Aorta (tissue), 5 donors: ENCODE measurements at regions of chr1 and their contacts with region 1.

Region 1: GRCh38 chr1:206612129-206612876 is at the start of gene EIF2D:
- DNase-seq: peak; percentile 95 to 98
- ATAC-seq: peak; percentile 100
- H3K4me3 ChIP-seq: peak within 1 kb of the TSS; percentile 43 to 83
- H3K27ac ChIP-seq: peak within 1 kb of the TSS in 1 of 2 donors; percentile 82
- H3K4me1 ChIP-seq: no peaks in the 10 kb centered on the region
- H3K27me3 ChIP-seq: no peaks in the 10 kb centered on the region
- total RNA-seq, gene EIF2D: 29.6 to 46.5 TPM

Region 2: DNA sequence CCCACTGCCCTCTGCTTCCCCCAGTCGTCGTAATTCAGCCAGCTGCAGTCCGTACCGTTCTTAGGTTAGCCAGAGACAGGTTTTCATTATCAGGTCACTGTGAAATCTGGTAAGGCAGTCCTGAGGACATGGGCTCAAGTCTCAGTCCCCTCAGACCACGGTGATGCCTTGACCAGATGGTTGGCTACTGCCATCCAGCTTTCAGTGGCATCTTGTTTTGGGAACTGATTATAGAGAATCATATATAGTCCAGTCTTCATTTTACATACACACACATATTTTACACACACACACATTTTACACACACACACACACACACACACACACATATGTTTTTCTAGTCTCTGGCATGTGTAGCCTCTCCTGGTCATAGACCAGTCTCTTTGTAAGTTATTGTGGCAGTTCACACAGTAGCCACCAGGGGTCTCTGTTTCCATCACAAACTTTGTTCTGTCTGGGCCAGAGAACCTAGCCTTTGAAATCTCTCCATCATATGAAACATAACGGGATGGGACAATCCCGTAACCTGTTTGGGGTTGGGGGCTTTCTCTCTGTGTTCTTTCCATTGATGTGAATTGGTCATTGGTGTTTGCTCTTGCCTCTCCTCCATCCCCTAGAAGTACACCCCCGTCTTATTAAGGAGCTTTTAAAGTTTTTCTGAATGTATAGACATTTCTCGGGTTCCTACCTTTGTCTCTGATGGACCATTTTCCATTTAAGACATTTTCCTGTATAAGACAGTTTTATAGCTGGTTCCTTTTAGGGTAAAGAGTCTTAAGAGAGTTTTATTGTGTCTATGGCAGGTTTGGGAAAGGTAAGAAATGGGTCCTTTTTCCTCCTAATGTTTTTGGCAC is 150.5 kb before region 1 on chr1:
- intact Hi-C with region 1: no loop called
- DNase-seq: peak in 1 of 2 donors; percentile 71
- ATAC-seq: peak; percentile 82
- H3K4me3 ChIP-seq: no peak overlapping the region
- H3K27ac ChIP-seq: no peak overlapping the region
- H3K4me1 ChIP-seq: peaks cover 0 to 2% of the 10 kb centered on the region in 2 donors
- H3K27me3 ChIP-seq: no peaks in the 10 kb centered on the region

Region 3: GRCh38 chr1:206479183-206480125 is 132.8 kb before region 1 on chr1:
- intact Hi-C with region 1: no loop called
- DNase-seq: peak; percentile 71 to 88
- ATAC-seq: peak; percentile 53
- H3K4me3 ChIP-seq: no peak overlapping the region
- H3K27ac ChIP-seq: no peak overlapping the region
- H3K4me1 ChIP-seq: no peaks in the 10 kb centered on the region
- H3K27me3 ChIP-seq: no peaks in the 10 kb centered on the region

Region 4: DNA sequence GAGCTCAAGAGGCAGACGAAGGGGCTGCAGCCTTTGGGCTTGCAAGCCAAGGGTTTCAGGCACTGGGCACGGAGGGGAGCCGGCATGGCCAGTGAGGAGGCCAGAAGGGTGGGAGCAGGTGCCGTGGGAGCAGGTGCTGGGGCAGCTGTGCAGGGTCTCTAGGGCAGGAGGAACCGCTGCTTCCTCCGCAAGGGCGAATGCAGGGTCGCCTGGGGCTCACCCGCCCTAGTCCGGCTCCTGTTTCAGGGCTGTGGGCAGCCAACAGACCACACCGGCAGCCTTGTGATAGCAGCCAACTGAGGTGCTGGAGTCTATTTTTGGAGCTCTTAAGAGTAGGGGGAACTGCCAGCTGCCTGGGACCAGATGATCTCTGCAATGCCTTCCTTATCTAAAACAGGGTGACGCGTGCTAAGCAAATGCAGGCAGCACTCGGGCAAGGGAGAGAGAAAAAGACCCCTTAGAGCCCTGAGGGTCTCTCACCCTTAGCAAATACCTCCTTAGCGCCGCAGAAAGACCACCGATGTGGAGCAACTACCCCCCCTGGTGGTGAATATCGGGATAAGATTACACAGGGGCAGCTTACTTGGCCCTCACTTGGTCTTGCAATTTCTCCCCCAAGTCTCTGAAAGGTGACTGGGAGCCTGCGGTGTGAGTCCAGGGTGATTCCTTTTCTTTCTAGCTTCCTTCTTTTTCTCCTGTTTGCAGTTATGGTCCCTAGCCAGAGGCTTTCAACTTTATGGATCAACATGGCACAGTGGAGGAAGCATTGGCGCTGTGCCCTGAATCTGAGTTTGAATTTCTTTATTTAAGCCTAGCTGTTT is 51.7 kb after region 1 on chr1:
- intact Hi-C with region 1: loop called in 1 of 2 experiments (anchors 10 kb)
- DNase-seq: peak in 1 of 2 donors; percentile 57
- ATAC-seq: peak; percentile 87
- H3K4me3 ChIP-seq: no peak overlapping the region
- H3K27ac ChIP-seq: no peak overlapping the region
- H3K4me1 ChIP-seq: no peaks in the 10 kb centered on the region
- H3K27me3 ChIP-seq: no peaks in the 10 kb centered on the region